Cardiac septum (tissue), 1 donor: ENCODE measurements at regions of chr2 and their contacts with region 1.

Region 1: DNA sequence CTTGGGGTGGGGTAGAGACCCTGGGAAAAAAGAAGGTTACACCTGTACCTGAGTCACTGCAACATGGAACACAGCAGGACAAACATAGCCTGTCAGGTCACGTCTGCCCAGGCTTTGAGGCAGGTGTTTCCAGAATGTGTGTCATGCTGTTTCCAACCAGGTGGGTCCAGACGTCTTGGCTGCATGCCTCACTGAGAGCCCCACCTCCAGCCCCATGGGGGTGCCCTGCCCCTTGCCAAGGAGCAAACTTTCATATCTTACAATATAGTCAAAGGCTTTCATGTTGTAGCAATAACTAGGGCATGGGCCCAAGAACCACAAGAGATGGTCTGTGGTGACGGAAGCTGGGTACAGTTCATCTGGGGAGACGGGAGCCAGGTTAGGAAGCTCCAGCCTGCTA is 499.7 kb downstream of the BCL11A start:
- DNase-seq: no peak

Region 2: DNA sequence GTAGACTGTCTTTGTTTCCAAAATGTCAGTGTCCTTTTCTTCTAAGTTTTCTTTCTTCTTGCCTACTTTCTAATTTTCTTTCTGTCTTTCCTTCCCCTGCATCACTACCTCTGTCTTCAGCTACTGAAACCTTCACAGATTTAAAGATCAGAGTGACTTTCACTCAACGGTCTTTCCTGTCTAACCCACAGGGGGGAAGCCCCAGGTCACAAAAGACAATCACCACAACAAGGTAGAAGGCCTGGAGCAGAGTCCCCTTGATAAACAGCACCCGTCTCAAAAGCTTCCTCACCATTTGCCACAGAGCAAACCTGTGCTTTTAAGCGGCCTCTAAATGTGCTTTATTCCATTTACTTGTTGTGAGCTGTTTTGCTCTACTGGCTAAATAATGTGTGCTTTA is 165.8 kb before region 1 on chr2:
- intact Hi-C with region 1: loop called (anchors 5 kb)
- DNase-seq: no peak

Region 3: GRCh38 chr2:60094450-60094929 is 40.7 kb after region 1 on chr2:
- intact Hi-C with region 1: loop called (anchors 2 kb)
- DNase-seq: no peak